CD8-positive, alpha-beta memory T cell (primary cell): ENCODE measurements at regions of chr14 and their contacts with region 1.

Region 1: DNA sequence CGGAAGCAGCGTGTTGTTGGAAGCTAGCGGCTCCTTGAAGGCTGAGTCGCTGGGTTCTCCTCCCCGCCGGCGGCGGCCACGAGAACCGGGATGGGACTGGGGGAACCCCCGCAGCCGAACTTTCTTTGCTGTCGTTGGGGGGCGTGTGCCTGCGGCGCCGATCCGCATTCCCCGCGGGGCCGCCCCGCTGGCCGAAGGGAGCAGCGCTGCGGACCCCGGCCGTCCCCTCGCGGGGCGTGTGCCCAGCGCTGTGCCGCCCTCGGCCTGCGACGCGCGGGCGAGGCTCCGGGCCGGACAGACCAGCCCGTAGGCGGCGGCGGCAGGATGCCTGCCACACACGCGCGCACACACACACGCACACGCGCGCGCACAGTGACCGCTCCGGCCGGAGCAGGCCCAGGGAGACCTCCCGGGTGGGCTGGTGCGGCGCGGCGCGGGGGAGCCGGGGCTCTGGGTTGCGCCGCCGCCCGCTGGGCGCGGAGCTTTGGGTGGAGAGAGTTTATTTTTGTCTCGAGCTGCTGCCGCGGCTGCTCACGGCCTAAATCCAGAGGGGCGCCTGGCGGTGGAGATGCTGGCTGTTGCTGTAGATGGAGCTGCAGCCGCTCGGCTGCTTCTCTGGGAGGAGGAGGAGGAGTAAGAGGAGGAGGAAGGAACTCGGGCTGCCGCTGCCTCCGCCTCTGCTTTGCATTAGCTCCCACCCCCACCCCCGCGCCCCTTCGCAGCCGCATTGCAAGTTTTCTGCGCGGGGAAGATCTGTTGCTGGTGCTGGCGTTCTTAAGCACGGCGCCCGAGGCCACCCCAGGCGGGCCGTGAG is at the start of gene SAMD4A:
- DNase-seq: peak; percentile 29 to 74 (median 49)
- H3K4me3 ChIP-seq: peak within 1 kb of the TSS; percentile 81
- H3K4me3 Mint-ChIP-seq: peak within 1 kb of the TSS; percentile 90 to 98 (median 93)
- H3K27ac ChIP-seq: peak within 1 kb of the TSS; percentile 64
- H3K27ac Mint-ChIP-seq: peak within 1 kb of the TSS in 7 of 8 donors; percentile 74 to 94 (median 89)
- H3K4me1 ChIP-seq: peaks cover 18% of the 10 kb centered on the region
- H3K4me1 Mint-ChIP-seq: peaks cover 16 to 23% (median 16%) of the 10 kb centered on the region in 3 donors
- H3K27me3 ChIP-seq: peaks cover 12% of the 10 kb centered on the region
- H3K27me3 Mint-ChIP-seq: peaks cover 15 to 34% of the 10 kb centered on the region in 2 donors
- total RNA-seq, gene SAMD4A: 2.4 to 2.7 TPM

Region 2: DNA sequence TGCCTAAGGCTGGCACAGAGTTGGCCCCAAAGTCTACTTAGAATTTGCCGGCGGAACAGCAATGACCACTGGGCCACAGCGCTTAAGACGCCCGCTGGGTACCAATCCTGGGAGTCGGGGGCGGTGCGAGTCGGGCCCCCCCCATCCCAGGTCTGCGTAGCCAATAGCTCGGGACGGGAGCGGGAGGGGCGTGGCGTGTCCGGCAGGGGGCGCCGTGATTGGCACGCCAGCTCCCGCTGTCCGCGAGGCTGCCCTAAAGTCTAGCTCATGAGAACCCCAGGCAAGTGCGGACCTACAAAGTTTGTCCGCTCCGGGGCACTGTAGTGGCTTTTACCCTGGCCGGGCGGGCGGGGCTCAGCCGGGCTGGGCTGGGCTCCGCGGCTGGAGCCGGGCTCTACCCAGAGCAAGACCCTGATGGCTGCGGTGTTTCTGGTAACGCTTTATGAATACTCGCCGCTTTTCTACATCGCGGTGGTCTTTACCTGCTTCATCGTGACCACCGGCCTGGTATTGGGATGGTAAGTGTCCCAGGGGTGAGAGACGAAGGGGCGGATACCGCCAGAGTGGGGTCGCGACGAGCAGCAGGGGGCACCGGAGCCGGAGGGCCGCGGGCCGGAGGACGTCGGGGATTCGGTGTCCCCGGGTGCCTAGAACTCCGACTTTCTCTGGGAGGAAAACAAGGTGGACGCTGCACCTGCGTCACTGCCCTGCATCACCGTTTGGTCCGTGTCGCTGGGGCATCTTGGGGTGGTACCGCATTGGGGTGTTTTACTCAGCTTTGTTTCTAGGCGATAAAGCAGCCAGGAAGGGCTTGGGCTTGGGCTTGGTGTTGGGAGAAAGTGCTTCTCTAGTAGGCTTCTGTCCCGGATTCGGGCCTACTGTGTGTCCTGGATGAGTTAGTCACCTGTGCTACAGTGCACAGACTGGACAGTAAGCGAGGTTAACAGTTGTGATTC is 56.8 kb before region 1 on chr14 and contains the start of gene CGRRF1:
- CTCF ChIA-PET with region 1: interaction called, 6 read pairs
- POLR2A ChIA-PET with region 1: interaction called, 12 read pairs
- DNase-seq: peak; percentile 92 to 97 (median 95)
- H3K4me3 ChIP-seq: peak within 1 kb of the TSS; percentile 97
- H3K4me3 Mint-ChIP-seq: peak within 1 kb of the TSS; percentile 95 to 99 (median 97)
- H3K27ac ChIP-seq: peak within 1 kb of the TSS; percentile 88
- H3K27ac Mint-ChIP-seq: peak within 1 kb of the TSS; percentile 81 to 97 (median 94)
- H3K4me1 ChIP-seq: peaks cover 32% of the 10 kb centered on the region
- H3K4me1 Mint-ChIP-seq: peaks cover 47 to 58% (median 57%) of the 10 kb centered on the region in 3 donors
- H3K27me3 ChIP-seq: no peaks in the 10 kb centered on the region
- H3K27me3 Mint-ChIP-seq: no peaks in the 10 kb centered on the region
- total RNA-seq, gene CGRRF1: 13.3 to 15.3 TPM

Region 3: DNA sequence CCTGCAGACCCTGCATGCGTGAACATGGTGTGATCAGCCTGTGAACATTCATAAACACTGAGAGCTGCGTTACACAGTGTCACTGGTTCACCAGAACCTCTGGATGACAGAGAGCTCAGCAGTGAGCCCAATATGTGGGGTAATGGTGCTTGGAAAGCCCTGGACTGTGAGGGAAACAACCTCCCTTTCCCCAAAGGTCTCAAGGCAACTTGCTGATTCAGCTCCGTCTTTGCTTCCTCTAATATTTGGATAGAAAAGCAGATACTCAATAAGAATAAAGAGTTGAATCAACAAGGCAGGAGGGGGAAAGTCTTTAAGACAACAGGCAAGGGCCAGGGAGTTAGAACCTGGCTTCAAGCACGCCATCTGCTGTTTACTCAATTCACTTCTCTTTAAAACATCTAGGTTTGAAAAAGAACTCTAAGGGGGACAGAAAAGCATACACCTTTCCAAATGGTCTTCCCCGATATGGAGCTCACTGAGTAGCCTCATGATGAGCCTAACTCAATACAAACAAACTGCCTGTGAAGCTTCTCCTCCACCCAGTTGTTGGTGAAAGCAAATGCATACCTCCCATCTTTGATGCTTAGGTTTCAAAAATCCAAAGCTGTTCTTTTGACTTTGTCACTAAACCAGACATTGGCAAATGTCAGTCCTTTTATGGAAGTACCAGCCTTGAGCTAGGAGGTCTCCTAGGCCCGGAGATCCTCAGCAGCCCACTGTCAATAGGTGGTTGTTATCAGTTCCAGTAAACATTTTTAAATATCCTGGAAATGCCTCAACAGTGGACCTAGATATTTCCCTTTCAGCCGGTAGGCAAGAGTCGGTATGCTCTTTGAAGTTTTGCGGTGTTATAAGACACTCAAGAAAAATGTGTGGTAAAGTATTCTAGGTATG is 76.4 kb after region 1 on chr14:
- CTCF ChIA-PET with region 1: interaction called, 11 read pairs
- POLR2A ChIA-PET with region 1: no interaction called
- DNase-seq: no peak
- H3K4me3 ChIP-seq: no peak overlapping the region
- H3K4me3 Mint-ChIP-seq: no peak overlapping the region
- H3K27ac ChIP-seq: no peak overlapping the region
- H3K27ac Mint-ChIP-seq: no peak overlapping the region
- H3K4me1 ChIP-seq: no peaks in the 10 kb centered on the region
- H3K4me1 Mint-ChIP-seq: no peaks in the 10 kb centered on the region
- H3K27me3 ChIP-seq: no peaks in the 10 kb centered on the region
- H3K27me3 Mint-ChIP-seq: peaks cover 2 to 8% of the 10 kb centered on the region in 2 donors

Region 4: DNA sequence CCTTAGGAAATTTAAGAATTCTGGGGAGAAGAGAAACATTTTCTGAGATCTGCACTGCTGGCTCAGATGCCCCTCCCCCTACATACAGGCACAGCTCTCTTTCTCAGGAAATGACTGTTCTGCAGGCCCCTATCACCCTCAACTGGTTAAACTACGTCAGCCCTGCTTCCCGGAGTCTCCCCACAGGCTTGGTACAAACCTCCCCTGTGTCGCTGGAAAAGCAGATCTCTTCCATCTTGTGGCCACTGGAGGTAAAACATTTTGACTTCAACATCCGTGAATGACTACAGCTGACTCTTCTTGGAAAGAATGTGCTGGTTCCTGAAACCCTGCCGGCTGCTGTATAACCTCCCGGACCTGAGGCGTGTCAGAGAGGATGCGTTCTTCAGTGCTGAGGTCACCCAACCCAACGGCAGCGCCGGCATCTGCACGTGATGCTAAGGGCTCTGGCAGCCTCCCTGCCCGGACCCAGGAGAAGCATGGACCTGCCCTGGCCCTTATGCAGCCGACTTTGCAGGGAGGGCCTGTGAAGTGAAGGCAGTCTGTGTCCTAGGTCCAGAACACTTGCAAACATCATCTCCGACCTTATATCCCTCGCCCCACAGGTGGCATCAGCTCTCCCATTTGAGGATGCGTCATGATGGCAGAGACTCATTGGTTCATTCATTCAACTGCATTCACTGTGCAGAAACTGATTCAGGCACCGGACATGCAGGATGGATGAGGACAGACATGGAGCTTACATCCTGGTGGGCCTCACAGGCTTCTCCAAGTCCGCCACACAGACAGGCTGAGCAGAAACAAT is 206.8 kb after region 1 on chr14:
- CTCF ChIA-PET with region 1: interaction called, 114 read pairs
- POLR2A ChIA-PET with region 1: interaction called, 10 read pairs
- DNase-seq: peak; percentile 20 to 60 (median 40)
- H3K4me3 ChIP-seq: peak overlapping the region; percentile 25
- H3K4me3 Mint-ChIP-seq: peak overlapping the region in 5 of 7 donors; percentile 1 to 75 (median 24)
- H3K27ac ChIP-seq: no peak overlapping the region
- H3K27ac Mint-ChIP-seq: peak overlapping the region in 6 of 8 donors; percentile 3 to 74 (median 38)
- H3K4me1 ChIP-seq: peaks cover 21% of the 10 kb centered on the region
- H3K4me1 Mint-ChIP-seq: peaks cover 25 to 33% (median 31%) of the 10 kb centered on the region in 3 donors
- H3K27me3 ChIP-seq: no peaks in the 10 kb centered on the region
- H3K27me3 Mint-ChIP-seq: peaks cover 10 to 18% of the 10 kb centered on the region in 2 donors

Region 5: DNA sequence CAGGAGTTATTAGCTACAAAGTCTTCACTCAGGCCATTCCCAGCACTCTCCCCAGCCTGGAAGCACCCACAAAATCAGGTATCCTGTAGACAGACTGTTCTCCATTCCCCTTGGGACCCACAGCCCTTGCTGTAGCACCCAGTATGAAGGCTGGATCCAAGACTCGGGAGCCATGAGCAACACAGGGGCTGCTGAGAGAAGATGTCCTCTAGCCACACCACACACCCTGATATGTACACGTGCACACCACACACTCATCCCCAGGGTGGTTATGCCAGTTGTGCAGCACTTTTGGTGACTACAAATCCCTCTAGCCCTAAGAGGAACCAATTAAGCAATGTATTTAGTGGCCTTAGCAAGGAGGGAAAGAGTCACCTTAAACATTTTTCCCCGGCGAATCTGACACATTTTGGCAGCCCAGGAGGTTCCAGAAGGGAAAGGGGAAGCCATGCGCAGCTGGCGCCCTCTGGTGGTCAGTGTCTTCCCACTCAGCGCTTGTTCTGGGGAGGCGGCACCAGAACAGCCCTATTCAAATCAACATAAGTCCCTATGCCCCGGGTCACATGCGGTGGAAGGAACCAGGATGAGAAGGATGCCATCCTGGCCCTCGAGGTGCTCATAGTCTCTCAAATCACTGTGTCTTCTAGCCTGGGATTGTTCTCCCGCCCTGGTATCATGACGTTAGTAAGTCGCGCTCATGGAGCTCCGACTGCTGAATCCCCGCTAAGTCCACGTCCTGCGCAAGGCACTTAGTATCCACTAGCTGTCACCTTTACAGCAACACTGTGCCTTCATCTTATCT is 239.1 kb after region 1 on chr14:
- CTCF ChIA-PET with region 1: interaction called, 12 read pairs
- POLR2A ChIA-PET with region 1: no interaction called
- DNase-seq: peak; percentile 50 to 73 (median 58)
- H3K4me3 ChIP-seq: no peak overlapping the region
- H3K4me3 Mint-ChIP-seq: peak overlapping the region in 1 of 7 donors; percentile 25
- H3K27ac ChIP-seq: no peak overlapping the region
- H3K27ac Mint-ChIP-seq: peak overlapping the region in 1 of 8 donors; percentile 43
- H3K4me1 ChIP-seq: peaks cover 4% of the 10 kb centered on the region
- H3K4me1 Mint-ChIP-seq: peaks cover 4 to 8% (median 5%) of the 10 kb centered on the region in 3 donors
- H3K27me3 ChIP-seq: no peaks in the 10 kb centered on the region
- H3K27me3 Mint-ChIP-seq: peaks cover 9 to 32% of the 10 kb centered on the region in 2 donors